ENCODE measurements at regions of chr1 and their contacts with region 1.

Region 1: GRCh38 chr1:152189657-152190442 is 30.8 kb upstream of the RPTN start:
- DNase-seq: peak; percentile 37 to 84 (median 58)
- ATAC-seq: peak; percentile 71
- H3K4me3 ChIP-seq: peak overlapping the region; percentile 68
- H3K4me3 Mint-ChIP-seq: peak overlapping the region; percentile 72
- H3K27ac ChIP-seq: no peak overlapping the region
- H3K27ac Mint-ChIP-seq: no peak overlapping the region
- H3K4me1 ChIP-seq: peaks cover 14% of the 10 kb centered on the region
- H3K4me1 Mint-ChIP-seq: peaks cover 10% of the 10 kb centered on the region
- H3K27me3 ChIP-seq: peaks cover 3 to 8% of the 10 kb centered on the region in 2 experiments
- H3K27me3 Mint-ChIP-seq: peaks cover 9% of the 10 kb centered on the region
- CTCF ChIP-seq: peak; percentile 83

Region 2: DNA sequence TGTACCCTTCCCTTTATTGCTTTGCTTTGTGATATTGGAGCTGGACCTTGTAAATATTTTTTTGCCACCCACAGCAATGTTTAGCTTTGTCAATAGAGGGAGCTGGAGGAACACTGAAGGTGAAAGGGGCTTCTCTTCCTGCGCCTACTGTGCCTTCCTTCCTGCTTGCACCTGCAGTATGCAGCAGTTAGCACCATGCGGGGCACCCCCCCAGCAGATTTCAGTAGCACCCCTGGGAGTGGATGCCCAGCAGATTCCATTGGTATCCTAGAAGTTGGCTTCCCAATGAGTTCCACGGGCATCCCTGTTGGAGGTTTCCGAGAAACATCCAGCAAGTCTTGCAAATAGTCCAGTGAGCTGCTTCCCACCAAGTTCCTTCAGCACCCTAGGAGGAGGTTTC is 221.8 kb before region 1 on chr1:
- CTCF ChIA-PET with region 1: no interaction called
- POLR2A ChIA-PET with region 1: no interaction called
- intact Hi-C with region 1: loop called in 1 of 2 experiments (anchors 10 kb)
- DNase-seq: peak; percentile 20 to 83 (median 38)
- ATAC-seq: peak; percentile 99
- H3K4me3 ChIP-seq: no peak overlapping the region
- H3K4me3 Mint-ChIP-seq: no peak overlapping the region
- H3K27ac ChIP-seq: no peak overlapping the region
- H3K27ac Mint-ChIP-seq: no peak overlapping the region
- H3K4me1 ChIP-seq: peaks cover 9% of the 10 kb centered on the region
- H3K4me1 Mint-ChIP-seq: peaks cover 7% of the 10 kb centered on the region
- H3K27me3 ChIP-seq: no peaks in the 10 kb centered on the region
- H3K27me3 Mint-ChIP-seq: no peaks in the 10 kb centered on the region
- CTCF ChIP-seq: peak; percentile 72

Region 3: DNA sequence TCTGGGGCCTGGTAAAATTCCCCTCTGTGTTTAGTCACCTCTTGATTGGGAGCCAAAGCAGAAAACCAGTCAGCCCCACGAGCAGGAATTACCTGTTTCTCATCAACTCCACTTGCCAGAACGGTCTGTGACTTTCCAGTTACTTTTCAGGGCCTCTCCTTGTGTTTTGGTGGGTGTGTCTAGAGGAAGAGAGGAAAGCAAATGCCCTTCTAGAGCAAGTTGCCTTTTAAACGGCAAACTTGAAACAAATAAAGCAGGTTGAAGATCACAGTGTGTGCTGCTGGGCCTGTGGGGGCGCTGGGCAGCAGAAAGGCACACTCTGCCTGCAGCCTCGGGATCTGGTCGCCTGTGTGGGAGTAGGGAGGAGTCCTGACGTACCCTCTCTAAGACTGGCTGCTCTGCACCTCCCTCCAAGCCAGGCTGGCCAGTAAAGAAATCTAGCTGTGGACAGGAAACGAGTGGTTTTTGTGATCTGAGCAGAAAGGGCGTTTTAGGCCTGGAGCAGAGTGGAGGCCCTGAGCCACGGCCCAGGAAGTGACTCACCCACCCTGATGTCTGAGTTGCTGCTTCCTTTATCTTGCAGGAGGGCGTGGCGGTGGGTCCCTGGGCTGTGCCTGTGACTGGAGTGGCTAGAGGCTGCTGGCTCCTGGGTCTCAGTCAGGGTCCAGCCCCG is 142.0 kb before region 1 on chr1:
- CTCF ChIA-PET with region 1: interaction called, 12 read pairs
- POLR2A ChIA-PET with region 1: no interaction called
- intact Hi-C with region 1: loop called (anchors 1 kb)
- DNase-seq: peak; percentile 65 to 95 (median 84)
- ATAC-seq: peak; percentile 89
- H3K4me3 ChIP-seq: peak overlapping the region; percentile 26
- H3K4me3 Mint-ChIP-seq: peak overlapping the region; percentile 72
- H3K27ac ChIP-seq: peak overlapping the region; percentile 94 to 96
- H3K27ac Mint-ChIP-seq: peak overlapping the region; percentile 96
- H3K4me1 ChIP-seq: peaks cover 39% of the 10 kb centered on the region
- H3K4me1 Mint-ChIP-seq: peaks cover 31% of the 10 kb centered on the region
- H3K27me3 ChIP-seq: peaks cover 0 to under 1% of the 10 kb centered on the region in 2 experiments
- H3K27me3 Mint-ChIP-seq: peaks cover 4% of the 10 kb centered on the region
- CTCF ChIP-seq: peak; percentile 52

Region 4: GRCh38 chr1:152078831-152079441 is 110.9 kb before region 1 on chr1:
- CTCF ChIA-PET with region 1: no interaction called
- POLR2A ChIA-PET with region 1: no interaction called
- intact Hi-C with region 1: no loop called
- DNase-seq: no peak
- ATAC-seq: no peak
- H3K4me3 ChIP-seq: no peak overlapping the region
- H3K4me3 Mint-ChIP-seq: no peak overlapping the region
- H3K27ac ChIP-seq: no peak overlapping the region
- H3K27ac Mint-ChIP-seq: no peak overlapping the region
- H3K4me1 ChIP-seq: no peaks in the 10 kb centered on the region
- H3K4me1 Mint-ChIP-seq: no peaks in the 10 kb centered on the region
- H3K27me3 ChIP-seq: peaks cover 4 to 7% of the 10 kb centered on the region in 2 experiments
- H3K27me3 Mint-ChIP-seq: peaks cover 41% of the 10 kb centered on the region
- CTCF ChIP-seq: no peak

Region 5: DNA sequence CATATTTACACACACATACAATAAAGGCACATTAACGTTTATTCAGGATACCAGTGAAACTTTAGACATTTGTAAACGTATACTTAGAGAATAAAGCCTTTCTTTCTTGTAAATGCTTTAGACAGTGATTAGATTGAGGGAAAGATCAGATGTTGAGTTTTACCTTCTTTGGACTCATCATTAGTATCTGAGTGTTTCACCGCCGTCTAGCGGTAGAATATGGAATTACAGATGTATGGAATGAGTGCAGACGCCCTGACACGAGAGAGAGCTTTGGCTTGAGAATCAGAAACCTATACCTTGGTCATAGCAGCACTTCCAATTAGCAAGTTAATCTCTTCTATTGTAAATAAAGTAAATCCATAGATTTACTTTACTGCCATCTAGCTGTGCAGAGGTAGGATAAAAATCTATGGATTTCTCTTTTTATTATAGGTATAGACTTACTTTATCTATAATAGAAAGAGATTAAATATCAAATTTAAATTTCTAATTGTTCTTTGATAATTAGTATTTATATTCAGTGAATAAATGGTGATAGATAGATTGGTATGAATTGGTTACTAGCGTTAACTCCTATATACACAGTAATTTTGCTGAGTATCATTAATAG is 157.4 kb after region 1 on chr1:
- CTCF ChIA-PET with region 1: no interaction called
- POLR2A ChIA-PET with region 1: no interaction called
- intact Hi-C with region 1: loop called in 1 of 2 experiments (anchors 5 kb)
- DNase-seq: peak in 13 of 14 experiments; percentile 1 to 77 (median 34)
- ATAC-seq: peak; percentile 57
- H3K4me3 ChIP-seq: no peak overlapping the region
- H3K4me3 Mint-ChIP-seq: no peak overlapping the region
- H3K27ac ChIP-seq: no peak overlapping the region
- H3K27ac Mint-ChIP-seq: no peak overlapping the region
- H3K4me1 ChIP-seq: no peaks in the 10 kb centered on the region
- H3K4me1 Mint-ChIP-seq: no peaks in the 10 kb centered on the region
- H3K27me3 ChIP-seq: peaks cover 0 to 11% of the 10 kb centered on the region in 2 experiments
- H3K27me3 Mint-ChIP-seq: peaks cover 29% of the 10 kb centered on the region
- CTCF ChIP-seq: peak; percentile 96

Region 6: DNA sequence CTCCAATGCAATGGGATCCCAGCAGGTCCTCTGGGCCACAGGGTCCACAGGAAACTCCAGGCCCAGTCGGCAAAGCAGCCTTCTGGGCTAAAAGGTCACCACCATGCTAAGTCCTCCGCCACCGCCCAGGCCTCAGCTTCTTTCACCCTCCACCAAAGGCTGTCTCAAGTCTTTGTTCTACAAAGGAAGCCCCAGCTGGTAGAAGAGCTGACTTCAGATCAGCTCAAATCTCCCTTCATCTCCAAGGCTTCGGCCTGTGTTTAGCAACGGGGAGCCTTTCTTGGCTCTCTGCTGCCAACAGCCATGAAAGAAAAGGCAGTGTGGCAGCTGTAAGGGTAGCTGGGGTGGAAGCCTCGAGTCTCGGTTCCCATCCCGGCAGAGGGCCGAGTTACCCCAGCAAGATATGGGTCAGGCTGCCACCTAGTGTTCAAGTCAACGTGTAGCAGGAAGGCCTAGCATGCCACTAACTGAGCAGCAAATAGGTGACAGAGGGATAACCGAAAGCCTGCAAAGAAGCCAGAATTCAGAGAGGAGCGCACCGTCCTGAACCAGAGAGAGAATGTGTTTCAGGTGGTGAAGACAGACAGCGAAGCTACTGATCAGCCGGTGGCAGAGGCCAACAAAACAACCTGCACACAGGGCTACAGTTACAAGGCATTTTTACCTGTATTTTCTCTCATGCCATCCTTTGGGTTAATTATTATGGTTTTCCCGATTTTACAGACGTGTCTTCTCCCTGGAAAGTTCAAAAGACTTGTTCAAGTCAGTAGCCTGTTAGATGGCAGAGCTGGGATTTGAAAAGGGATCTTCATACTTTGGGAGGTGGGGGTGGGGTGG is 251.0 kb after region 1 on chr1:
- CTCF ChIA-PET with region 1: interaction called, 5 read pairs
- POLR2A ChIA-PET with region 1: no interaction called
- intact Hi-C with region 1: loop called (anchors 1 kb)
- DNase-seq: peak; percentile 48 to 87 (median 60)
- ATAC-seq: peak; percentile 99
- H3K4me3 ChIP-seq: no peak overlapping the region
- H3K4me3 Mint-ChIP-seq: no peak overlapping the region
- H3K27ac ChIP-seq: no peak overlapping the region
- H3K27ac Mint-ChIP-seq: no peak overlapping the region
- H3K4me1 ChIP-seq: peaks cover 7% of the 10 kb centered on the region
- H3K4me1 Mint-ChIP-seq: peaks cover 5% of the 10 kb centered on the region
- H3K27me3 ChIP-seq: peaks cover 0 to 4% of the 10 kb centered on the region in 2 experiments
- H3K27me3 Mint-ChIP-seq: peaks cover 21% of the 10 kb centered on the region
- CTCF ChIP-seq: peak; percentile 90